GM13977 (cell line): ENCODE measurements at regions of chr3 and their contacts with region 1.

Region 1: GRCh38 chr3:9302425-9303181 is 53.2 kb upstream of the SRGAP3 start:
- DNase-seq: peak; percentile 77
- CTCF ChIP-seq: peak; percentile 82

Region 2: GRCh38 chr3:8970971-8971589 is 331.5 kb before region 1 on chr3:
- in situ Hi-C with region 1: loop called (anchors 10 kb)
- DNase-seq: peak; percentile 64
- CTCF ChIP-seq: peak; percentile 96